ENCODE measurements at regions of chr10 and their contacts with region 1.

Region 1: GRCh38 chr10:132588301-132589013 is 50.9 kb downstream of the INPP5A start:
- DNase-seq: peak; percentile 79
- H3K4me3 Mint-ChIP-seq: peak overlapping the region; percentile 5
- H3K27ac Mint-ChIP-seq: peak overlapping the region; percentile 8
- H3K4me1 Mint-ChIP-seq: peaks cover 70% of the 10 kb centered on the region
- H3K27me3 Mint-ChIP-seq: no peaks in the 10 kb centered on the region

Region 2: GRCh38 chr10:132551093-132551807 is 37.2 kb before region 1 on chr10:
- CTCF ChIA-PET with region 1: no interaction called
- intact Hi-C with region 1: loop called (anchors 2 kb)
- DNase-seq: peak; percentile 76
- H3K4me3 Mint-ChIP-seq: peak overlapping the region; percentile 72
- H3K27ac Mint-ChIP-seq: peak overlapping the region; percentile 69
- H3K4me1 Mint-ChIP-seq: peaks cover 40% of the 10 kb centered on the region
- H3K27me3 Mint-ChIP-seq: no peaks in the 10 kb centered on the region

Measured in activated naive CD4-positive, alpha-beta T cell treated with anti-CD3 and anti-CD28 coated beads for 36 hours (primary cell).